PC-9 (cell line): ENCODE measurements at regions of chr7 and their contacts with region 1.

Region 1: GRCh38 chr7:139471740-139472353 is 11.6 kb downstream of the KLRG2 start:
- DNase-seq: peak; percentile 58 to 76
- H3K4me3 ChIP-seq: no peak overlapping the region
- H3K27ac ChIP-seq: peak overlapping the region; percentile 25
- H3K4me1 ChIP-seq: peaks cover 12% of the 10 kb centered on the region
- H3K27me3 ChIP-seq: no peaks in the 10 kb centered on the region
- CTCF ChIP-seq: no peak

Region 2: DNA sequence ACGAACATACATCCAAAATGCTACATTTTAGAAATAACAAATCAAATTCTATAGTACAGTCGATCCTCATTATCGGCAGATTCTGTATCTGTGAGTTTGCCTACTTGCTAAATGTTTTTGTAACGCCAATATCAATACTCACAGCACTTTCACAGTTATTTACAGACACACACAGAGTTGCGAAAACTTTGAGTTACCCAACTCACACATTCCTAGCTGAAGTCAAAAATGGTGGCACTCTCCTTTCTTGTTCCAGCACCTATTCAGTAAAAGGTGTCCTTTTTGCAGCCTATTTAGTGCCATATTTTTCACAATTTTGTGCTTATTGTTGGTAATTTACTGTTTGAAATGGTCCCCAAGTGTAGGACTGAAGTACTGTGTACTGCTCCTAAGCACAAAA is 1233.9 kb before region 1 on chr7:
- CTCF ChIA-PET with region 1: interaction called, 10 read pairs
- POLR2A ChIA-PET with region 1: no interaction called
- intact Hi-C with region 1: no loop called
- DNase-seq: no peak
- H3K4me3 ChIP-seq: no peak overlapping the region
- H3K27ac ChIP-seq: no peak overlapping the region
- H3K4me1 ChIP-seq: peaks cover 24% of the 10 kb centered on the region
- H3K27me3 ChIP-seq: no peaks in the 10 kb centered on the region
- CTCF ChIP-seq: no peak